HCT116 (cell line): ENCODE measurements at regions of chr5 and their contacts with region 1.

Region 1: DNA sequence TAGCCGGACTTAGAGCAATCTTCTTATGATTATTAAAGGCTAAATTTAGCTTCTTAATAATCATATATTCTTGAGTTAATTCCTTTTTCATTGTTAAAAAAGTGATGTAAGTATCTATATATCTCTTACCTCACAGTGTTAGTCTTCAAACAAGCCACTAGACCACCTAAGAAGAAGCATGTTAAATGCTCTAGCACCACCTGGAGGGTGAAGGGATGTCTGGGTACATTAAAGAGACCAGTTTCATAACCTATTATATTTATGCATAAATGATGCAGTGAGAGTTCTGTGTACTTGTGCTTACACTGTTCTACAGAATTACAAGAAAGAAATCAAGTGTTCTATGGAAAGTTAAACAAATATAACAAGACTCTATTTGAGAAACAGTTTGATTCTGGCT is 55.9 kb upstream of the SLCO6A1 start:
- DNase-seq: peak; percentile 21
- ATAC-seq: peak; percentile 78
- H3K4me3 ChIP-seq: no peak overlapping the region
- H3K27ac ChIP-seq: no peak overlapping the region
- H3K4me1 ChIP-seq: no peaks in the 10 kb centered on the region
- H3K27me3 ChIP-seq: no peaks in the 10 kb centered on the region
- CTCF ChIP-seq: peak; percentile 28 to 61 (median 34); a peak in 5 of 6 replicates
- POLR2A ChIP-seq: no peak
- RAD21 ChIP-seq: peak; percentile 50

Region 2: GRCh38 chr5:102453716-102454115 is 101.0 kb before region 1 on chr5:
- CTCF ChIA-PET with region 1: interaction called, 4 read pairs
- POLR2A ChIA-PET with region 1: no interaction called
- RAD21 ChIA-PET with region 1: no interaction called
- intact Hi-C with region 1: loop called (anchors 5 kb)
- DNase-seq: no peak
- ATAC-seq: no peak
- H3K4me3 ChIP-seq: no peak overlapping the region
- H3K27ac ChIP-seq: no peak overlapping the region
- H3K4me1 ChIP-seq: no peaks in the 10 kb centered on the region
- H3K27me3 ChIP-seq: no peaks in the 10 kb centered on the region
- CTCF ChIP-seq: no peak
- POLR2A ChIP-seq: no peak
- RAD21 ChIP-seq: no peak

Region 3: DNA sequence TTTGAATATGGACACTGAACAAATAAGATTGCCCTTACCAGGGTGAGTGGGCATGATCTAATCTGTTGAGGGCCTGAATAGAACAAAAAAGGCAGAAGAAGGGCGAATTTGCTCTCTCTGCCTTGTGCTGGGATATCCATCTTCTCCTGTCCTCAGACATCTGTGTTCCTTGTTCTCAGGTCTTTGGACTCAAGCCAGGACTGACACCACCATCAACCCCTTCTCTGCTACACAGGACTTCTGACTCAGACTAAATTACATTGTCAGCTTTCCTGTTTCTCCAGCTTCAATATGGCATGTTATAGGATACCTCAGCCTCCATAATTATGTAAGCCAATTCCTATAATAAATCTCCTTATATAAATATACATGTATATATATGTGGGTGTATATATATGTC is 15.2 kb before region 1 on chr5:
- CTCF ChIA-PET with region 1: no interaction called
- POLR2A ChIA-PET with region 1: no interaction called
- RAD21 ChIA-PET with region 1: no interaction called
- intact Hi-C with region 1: no loop called
- DNase-seq: no peak
- ATAC-seq: no peak
- H3K4me3 ChIP-seq: no peak overlapping the region
- H3K27ac ChIP-seq: no peak overlapping the region
- H3K4me1 ChIP-seq: no peaks in the 10 kb centered on the region
- H3K27me3 ChIP-seq: no peaks in the 10 kb centered on the region
- CTCF ChIP-seq: no peak
- POLR2A ChIP-seq: no peak
- RAD21 ChIP-seq: no peak